HEK293 (cell line): ENCODE measurements at regions of chr2 and their contacts with region 1.

Region 1: GRCh38 chr2:192162392-192163042 is 32.2 kb downstream of the TMEFF2 start:
- H3K4me3 ChIP-seq: no peak overlapping the region
- H3K27ac ChIP-seq: no peak overlapping the region
- H3K4me1 ChIP-seq: no peaks in the 10 kb centered on the region; the same call in 1 of the 2 replicates
- CTCF ChIP-seq: peak; percentile 73; the same call in 1 of the 2 replicates

Region 2: DNA sequence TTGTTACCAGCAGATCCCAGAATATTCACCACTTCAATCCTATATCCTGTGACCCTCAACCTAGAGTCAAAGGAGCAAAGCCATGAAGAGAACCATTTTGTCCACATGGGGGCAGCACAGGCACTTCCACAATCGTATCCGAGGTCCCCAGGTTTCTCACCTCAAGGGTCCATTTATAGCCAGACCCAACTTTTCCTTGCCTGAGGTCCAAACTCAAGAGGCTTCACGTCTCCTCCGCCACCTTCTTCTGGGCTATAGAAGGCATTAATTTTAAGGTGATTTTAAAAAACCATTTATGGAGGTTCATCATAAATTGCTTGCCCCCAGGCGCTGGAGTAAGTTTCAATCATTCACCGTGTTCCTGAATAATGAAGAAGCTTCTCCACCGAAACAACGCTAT is 596.2 kb before region 1 on chr2:
- CTCF ChIA-PET with region 1: interaction called, 21 read pairs
- POLR2A ChIA-PET with region 1: no interaction called
- H3K4me3 ChIP-seq: no peak overlapping the region
- H3K27ac ChIP-seq: no peak overlapping the region
- H3K4me1 ChIP-seq: no peaks in the 10 kb centered on the region; the same call in 1 of the 2 replicates
- CTCF ChIP-seq: peak; percentile 38; the same call in 1 of the 2 replicates

Region 3: GRCh38 chr2:191806396-191806795 is 356.1 kb before region 1 on chr2:
- CTCF ChIA-PET with region 1: interaction called, 117 read pairs
- POLR2A ChIA-PET with region 1: no interaction called
- H3K4me3 ChIP-seq: no peak overlapping the region
- H3K27ac ChIP-seq: no peak overlapping the region
- H3K4me1 ChIP-seq: no peaks in the 10 kb centered on the region
- CTCF ChIP-seq: no peak

Region 4: GRCh38 chr2:191818725-191819350 is 343.7 kb before region 1 on chr2:
- CTCF ChIA-PET with region 1: interaction called, 44 read pairs
- POLR2A ChIA-PET with region 1: no interaction called
- H3K4me3 ChIP-seq: no peak overlapping the region
- H3K27ac ChIP-seq: no peak overlapping the region
- H3K4me1 ChIP-seq: no peaks in the 10 kb centered on the region
- CTCF ChIP-seq: no peak

Region 5: DNA sequence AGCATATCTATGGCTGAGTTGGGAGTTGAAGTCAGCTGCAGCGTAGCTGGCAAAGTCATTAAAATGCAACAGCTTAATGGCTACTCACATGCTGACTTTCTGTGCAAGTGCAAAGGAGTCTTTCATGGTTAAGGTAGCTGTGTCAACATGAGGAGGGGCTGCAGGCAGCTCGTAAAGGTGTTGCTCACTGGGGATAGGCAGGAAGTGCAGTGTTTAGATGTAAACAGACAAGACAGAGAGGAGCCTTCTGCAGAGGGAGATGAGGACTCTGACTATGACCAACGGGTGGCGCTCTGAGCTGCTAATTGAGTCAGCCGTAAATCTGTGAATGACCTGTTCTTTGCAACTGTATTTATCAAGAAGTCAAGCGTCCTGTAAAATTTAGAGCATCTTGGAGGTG is 293.3 kb before region 1 on chr2:
- CTCF ChIA-PET with region 1: interaction called, 90 read pairs
- POLR2A ChIA-PET with region 1: no interaction called
- H3K4me3 ChIP-seq: no peak overlapping the region
- H3K27ac ChIP-seq: no peak overlapping the region
- H3K4me1 ChIP-seq: no peaks in the 10 kb centered on the region
- CTCF ChIP-seq: no peak; the same call in 1 of the 2 replicates

Region 6: DNA sequence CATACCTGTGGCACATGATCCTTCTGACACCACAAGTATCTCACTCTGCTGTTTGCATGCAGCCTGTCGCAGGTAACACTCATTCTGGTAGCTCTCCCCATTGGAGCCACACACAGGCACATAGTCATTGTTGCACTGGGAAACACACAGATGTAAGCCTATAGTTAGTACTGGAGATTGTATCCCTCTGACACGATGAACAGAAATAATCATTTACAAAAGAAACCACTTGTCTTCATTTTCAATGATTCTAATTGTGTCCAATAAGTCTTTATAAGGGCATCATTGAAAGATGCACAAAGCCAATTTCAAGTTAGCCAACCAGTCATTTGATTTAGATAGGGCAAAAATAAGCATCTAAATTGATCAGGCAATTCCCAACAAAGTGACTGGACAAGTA is 21.8 kb after region 1 on chr2:
- CTCF ChIA-PET with region 1: no interaction called
- POLR2A ChIA-PET with region 1: no interaction called
- H3K4me3 ChIP-seq: no peak overlapping the region
- H3K27ac ChIP-seq: no peak overlapping the region
- H3K4me1 ChIP-seq: no peaks in the 10 kb centered on the region
- CTCF ChIP-seq: no peak

Region 7: GRCh38 chr2:192354512-192355244 is 192.2 kb after region 1 on chr2:
- CTCF ChIA-PET with region 1: no interaction called
- POLR2A ChIA-PET with region 1: no interaction called
- H3K4me3 ChIP-seq: no peak overlapping the region
- H3K27ac ChIP-seq: no peak overlapping the region
- H3K4me1 ChIP-seq: no peaks in the 10 kb centered on the region
- CTCF ChIP-seq: no peak